Panc1 (cell line): ENCODE measurements at regions of chr3 and their contacts with region 1.

Region 1: GRCh38 chr3:113516115-113516505 is 1.2 kb upstream of the SPICE1 start:
- DNase-seq: no peak
- ATAC-seq: no peak
- H3K4me3 ChIP-seq: peak overlapping the region; percentile 70 to 92
- H3K27ac ChIP-seq: no peak overlapping the region
- H3K4me1 ChIP-seq: peaks cover 6% of the 10 kb centered on the region; the same call in 1 of the 2 replicates
- H3K27me3 ChIP-seq: peaks cover 10% of the 10 kb centered on the region; the same call in 1 of the 2 replicates
- CTCF ChIP-seq: peak; percentile 49

Region 2: DNA sequence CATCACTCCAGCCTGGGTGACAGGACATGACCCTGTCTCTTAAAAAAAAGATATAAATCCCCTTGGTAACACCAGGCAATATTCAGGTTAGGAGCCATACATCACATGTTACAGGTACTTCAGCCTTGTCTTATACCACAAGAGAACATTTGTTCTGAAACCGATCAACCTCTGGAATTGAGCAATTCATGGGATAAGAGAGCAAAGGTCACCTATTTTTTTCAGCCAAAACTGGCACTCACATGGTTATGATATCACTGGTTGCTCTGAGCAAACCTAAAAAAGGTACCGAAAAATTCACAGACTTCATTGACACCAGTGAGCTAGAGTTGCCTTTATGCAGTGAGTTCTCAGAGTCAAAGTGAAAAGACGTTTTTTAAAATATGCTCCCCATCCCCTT is 10.2 kb before region 1 on chr3:
- CTCF ChIA-PET with region 1: no interaction called
- POLR2A ChIA-PET with region 1: no interaction called
- in situ Hi-C with region 1: no loop called
- intact Hi-C with region 1: no loop called
- DNase-seq: no peak
- ATAC-seq: no peak
- H3K4me3 ChIP-seq: no peak overlapping the region
- H3K27ac ChIP-seq: no peak overlapping the region
- H3K4me1 ChIP-seq: no peaks in the 10 kb centered on the region
- H3K27me3 ChIP-seq: no peaks in the 10 kb centered on the region
- CTCF ChIP-seq: no peak

Region 3: GRCh38 chr3:115068799-115069198 is 1552.7 kb after region 1 on chr3:
- CTCF ChIA-PET with region 1: no interaction called
- POLR2A ChIA-PET with region 1: interaction called, 14 read pairs
- in situ Hi-C with region 1: no loop called
- intact Hi-C with region 1: no loop called
- DNase-seq: no peak
- ATAC-seq: no peak
- H3K4me3 ChIP-seq: no peak overlapping the region
- H3K27ac ChIP-seq: no peak overlapping the region
- H3K4me1 ChIP-seq: no peaks in the 10 kb centered on the region
- H3K27me3 ChIP-seq: no peaks in the 10 kb centered on the region
- CTCF ChIP-seq: no peak